Calu3 (cell line): ENCODE measurements at regions of chr14 and their contacts with region 1.

Region 1: GRCh38 chr14:62126879-62127478 is 364.8 kb downstream of the SNAPC1 start:
- DNase-seq: peak; percentile 27
- H3K4me3 Mint-ChIP-seq: no peak overlapping the region
- H3K27ac Mint-ChIP-seq: no peak overlapping the region
- H3K4me1 Mint-ChIP-seq: no peaks in the 10 kb centered on the region
- H3K27me3 Mint-ChIP-seq: no peaks in the 10 kb centered on the region
- CTCF ChIP-seq: peak; percentile 65

Region 2: DNA sequence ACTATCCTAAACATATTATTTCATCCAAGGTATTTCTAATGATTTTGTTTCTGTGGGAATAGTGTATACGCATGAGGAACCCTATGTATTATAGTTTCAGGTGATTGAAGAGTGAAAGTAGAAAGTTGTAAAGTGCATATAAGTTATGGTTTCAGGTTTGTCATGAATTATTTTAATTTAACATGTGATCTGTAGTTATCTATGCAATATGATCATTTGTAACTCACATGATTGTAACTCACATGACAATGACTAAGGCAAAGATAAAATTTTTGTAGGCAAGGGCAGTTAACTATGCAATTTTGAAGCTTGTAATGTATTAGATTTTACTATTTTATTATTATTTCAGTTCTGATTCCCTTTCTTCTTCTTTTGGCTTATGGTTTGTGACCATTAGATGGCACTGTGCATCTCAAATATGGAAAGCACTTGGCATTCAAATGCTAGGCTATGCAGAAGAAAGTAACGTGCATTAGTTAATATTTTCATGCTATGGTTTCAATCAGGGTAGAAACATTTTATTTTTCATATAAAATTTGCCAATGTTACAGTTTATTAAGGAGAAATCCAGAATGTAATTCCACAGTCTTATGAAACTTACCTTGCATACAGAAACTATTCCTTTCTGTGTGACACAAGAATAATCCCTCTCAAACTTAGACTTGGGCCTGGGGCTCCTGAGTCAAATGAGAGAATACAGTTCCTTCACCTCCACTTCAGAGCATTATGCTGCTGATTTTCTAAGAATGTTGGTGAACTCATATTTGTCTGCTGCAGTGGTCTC is 830.1 kb before region 1 on chr14:
- CTCF ChIA-PET with region 1: no interaction called
- intact Hi-C with region 1: loop called (anchors 10 kb)
- DNase-seq: peak; percentile 25
- H3K4me3 Mint-ChIP-seq: no peak overlapping the region
- H3K27ac Mint-ChIP-seq: no peak overlapping the region
- H3K4me1 Mint-ChIP-seq: peaks cover 9% of the 10 kb centered on the region
- H3K27me3 Mint-ChIP-seq: no peaks in the 10 kb centered on the region
- CTCF ChIP-seq: peak; percentile 29

Region 3: DNA sequence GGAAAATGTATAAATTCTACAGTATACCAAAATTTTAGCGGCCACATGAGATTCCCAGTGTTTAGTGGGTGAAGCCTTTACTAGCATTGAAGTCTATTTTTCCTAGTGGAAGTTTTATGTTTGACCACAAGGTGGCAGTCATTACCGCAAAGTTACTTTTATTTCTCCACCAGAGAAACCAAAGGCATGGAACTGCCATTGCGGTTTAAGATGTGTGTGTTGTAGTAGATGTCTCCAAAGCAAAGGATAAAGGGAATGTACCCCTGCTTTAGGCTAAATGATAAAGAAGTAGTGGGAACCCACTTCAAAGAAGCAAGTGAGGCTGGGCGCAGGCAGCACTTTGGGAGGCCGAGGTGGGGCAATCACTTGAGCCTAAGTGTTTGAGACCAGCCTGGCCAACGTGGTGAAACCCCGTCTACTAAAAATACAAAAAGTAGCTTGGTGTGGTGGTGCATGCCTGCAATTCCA is 665.1 kb before region 1 on chr14:
- CTCF ChIA-PET with region 1: no interaction called
- intact Hi-C with region 1: loop called (anchors 5 kb)
- DNase-seq: peak; percentile 50
- H3K4me3 Mint-ChIP-seq: no peak overlapping the region
- H3K27ac Mint-ChIP-seq: peak overlapping the region; percentile 78
- H3K4me1 Mint-ChIP-seq: peaks cover 25% of the 10 kb centered on the region
- H3K27me3 Mint-ChIP-seq: no peaks in the 10 kb centered on the region
- CTCF ChIP-seq: peak; percentile 54

Region 4: DNA sequence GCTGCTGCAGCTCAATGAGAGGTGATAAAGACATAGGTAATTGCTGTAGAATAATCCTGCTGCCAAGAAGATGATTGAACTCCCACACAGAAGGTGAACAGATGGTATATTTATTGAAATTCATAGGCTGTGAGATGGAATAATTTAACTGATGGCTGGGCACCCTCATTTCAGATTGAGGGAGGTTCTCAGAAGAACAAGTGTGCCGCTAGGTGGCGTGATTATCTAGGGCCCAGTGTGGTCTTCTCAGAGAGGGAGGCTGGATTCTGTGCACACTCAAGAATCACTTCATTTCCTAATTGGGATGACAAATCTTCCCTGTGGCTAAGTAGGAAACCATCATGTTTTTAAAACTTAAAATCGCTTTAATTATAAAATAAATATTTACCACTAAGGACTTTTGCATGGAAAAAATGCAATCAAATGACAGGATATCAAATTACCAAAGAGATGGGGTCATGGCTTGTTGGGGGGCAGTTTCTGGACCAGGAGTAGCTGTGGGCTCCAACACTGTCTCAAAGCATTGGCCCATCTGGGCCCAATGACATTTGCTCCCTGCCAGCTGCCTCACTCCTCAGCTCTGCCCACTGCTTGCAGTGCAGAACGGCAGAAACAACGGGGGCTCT is 232.4 kb before region 1 on chr14:
- CTCF ChIA-PET with region 1: interaction called, 12 read pairs
- intact Hi-C with region 1: loop called (anchors 1 kb)
- DNase-seq: peak; percentile 72
- H3K4me3 Mint-ChIP-seq: no peak overlapping the region
- H3K27ac Mint-ChIP-seq: no peak overlapping the region
- H3K4me1 Mint-ChIP-seq: peaks cover 5% of the 10 kb centered on the region
- H3K27me3 Mint-ChIP-seq: peaks cover 39% of the 10 kb centered on the region
- CTCF ChIP-seq: peak; percentile 63

Region 5: GRCh38 chr14:61925043-61925442 is 201.9 kb before region 1 on chr14:
- CTCF ChIA-PET with region 1: interaction called, 56 read pairs
- intact Hi-C with region 1: loop called (anchors 1 kb)
- DNase-seq: peak; percentile 49
- H3K4me3 Mint-ChIP-seq: no peak overlapping the region
- H3K27ac Mint-ChIP-seq: no peak overlapping the region
- H3K4me1 Mint-ChIP-seq: peaks cover 44% of the 10 kb centered on the region
- H3K27me3 Mint-ChIP-seq: no peaks in the 10 kb centered on the region
- CTCF ChIP-seq: no peak

Region 6: DNA sequence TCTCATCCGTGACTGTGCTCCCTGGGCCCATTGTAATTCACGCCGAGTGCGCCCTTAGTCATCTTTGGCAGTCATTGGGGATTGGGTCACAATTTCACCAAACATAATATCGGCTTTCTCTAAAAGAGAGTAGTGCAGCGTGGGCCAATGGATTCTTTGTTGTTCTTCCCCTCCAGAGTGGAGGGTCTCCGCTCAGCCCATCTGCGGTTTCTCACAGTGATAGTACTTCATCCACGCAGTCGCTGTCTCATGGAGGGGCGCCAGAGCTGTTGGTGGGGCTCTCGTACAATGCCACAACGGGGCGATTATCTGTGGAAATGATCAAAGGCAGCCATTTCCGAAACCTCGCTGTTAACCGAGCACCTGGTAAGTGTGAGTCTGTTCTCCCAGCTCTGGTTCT is 43.0 kb before region 1 on chr14:
- CTCF ChIA-PET with region 1: no interaction called
- intact Hi-C with region 1: no loop called
- DNase-seq: no peak
- H3K4me3 Mint-ChIP-seq: no peak overlapping the region
- H3K27ac Mint-ChIP-seq: no peak overlapping the region
- H3K4me1 Mint-ChIP-seq: no peaks in the 10 kb centered on the region
- H3K27me3 Mint-ChIP-seq: no peaks in the 10 kb centered on the region
- CTCF ChIP-seq: no peak

Region 7: DNA sequence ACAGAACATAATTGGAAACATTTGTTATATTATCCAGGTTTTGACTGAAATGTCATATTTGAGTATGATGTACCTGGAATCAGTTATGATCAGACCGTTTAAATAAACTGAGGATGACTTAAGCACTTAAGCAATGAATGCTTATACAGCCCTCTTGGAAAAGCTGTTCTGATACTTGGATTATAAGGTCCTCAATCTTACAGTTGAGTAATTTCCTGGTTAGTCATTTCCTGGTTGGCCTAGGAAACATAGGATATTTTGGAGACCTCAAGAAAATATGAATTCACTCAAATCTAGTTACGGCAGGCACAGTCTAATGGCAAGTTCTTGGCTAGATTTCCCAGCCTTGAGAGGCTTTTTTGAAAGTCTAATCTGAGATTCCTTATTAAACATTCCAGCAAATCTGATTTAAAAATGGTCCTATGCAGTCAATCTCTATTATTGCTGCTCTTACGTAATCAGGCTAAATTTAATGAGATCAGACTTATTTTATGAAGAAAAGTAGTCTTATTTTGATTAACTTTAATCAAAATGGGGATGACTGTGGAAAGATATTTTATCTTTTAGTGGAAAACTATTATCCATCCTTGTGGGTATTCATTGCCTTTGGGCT is 82.4 kb after region 1 on chr14:
- CTCF ChIA-PET with region 1: no interaction called
- intact Hi-C with region 1: no loop called
- DNase-seq: no peak
- H3K4me3 Mint-ChIP-seq: no peak overlapping the region
- H3K27ac Mint-ChIP-seq: no peak overlapping the region
- H3K4me1 Mint-ChIP-seq: no peaks in the 10 kb centered on the region
- H3K27me3 Mint-ChIP-seq: peaks cover 28% of the 10 kb centered on the region
- CTCF ChIP-seq: no peak

Region 8: DNA sequence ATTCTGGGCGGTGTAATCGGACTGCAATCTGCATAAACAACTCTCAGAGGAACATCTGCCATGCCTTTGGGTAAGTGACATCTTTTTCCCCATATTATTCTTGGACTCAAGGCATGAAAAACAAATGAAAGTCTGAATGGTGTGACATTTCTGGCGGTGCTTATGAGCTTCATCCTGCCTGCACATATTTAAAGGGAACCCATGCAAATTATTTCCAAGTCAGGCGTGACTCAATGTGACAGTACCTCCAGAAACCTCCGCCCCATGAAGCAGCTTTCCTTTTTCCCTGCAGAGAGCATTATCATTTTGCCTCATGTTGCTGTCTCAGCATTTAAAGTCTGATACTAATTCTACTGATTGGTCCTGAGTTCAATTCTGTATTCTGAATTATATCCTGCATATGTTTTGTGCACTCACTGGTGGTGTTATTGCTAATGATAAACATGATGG is 220.6 kb after region 1 on chr14:
- CTCF ChIA-PET with region 1: no interaction called
- intact Hi-C with region 1: no loop called
- DNase-seq: no peak
- H3K4me3 Mint-ChIP-seq: no peak overlapping the region
- H3K27ac Mint-ChIP-seq: no peak overlapping the region
- H3K4me1 Mint-ChIP-seq: no peaks in the 10 kb centered on the region
- H3K27me3 Mint-ChIP-seq: no peaks in the 10 kb centered on the region
- CTCF ChIP-seq: no peak